Mammary epithelial cell (primary cell): ENCODE measurements at regions of chr12 and their contacts with region 1.

Region 1: GRCh38 chr12:104121001-104121400 is 17.0 kb downstream of the NFYB start:
- DNase-seq: peak; percentile 26
- H3K4me3 ChIP-seq: no peak overlapping the region
- H3K27ac ChIP-seq: no peak overlapping the region
- H3K4me1 ChIP-seq: no peaks in the 10 kb centered on the region
- H3K27me3 ChIP-seq: no peaks in the 10 kb centered on the region
- CTCF ChIP-seq: no peak

Region 2: DNA sequence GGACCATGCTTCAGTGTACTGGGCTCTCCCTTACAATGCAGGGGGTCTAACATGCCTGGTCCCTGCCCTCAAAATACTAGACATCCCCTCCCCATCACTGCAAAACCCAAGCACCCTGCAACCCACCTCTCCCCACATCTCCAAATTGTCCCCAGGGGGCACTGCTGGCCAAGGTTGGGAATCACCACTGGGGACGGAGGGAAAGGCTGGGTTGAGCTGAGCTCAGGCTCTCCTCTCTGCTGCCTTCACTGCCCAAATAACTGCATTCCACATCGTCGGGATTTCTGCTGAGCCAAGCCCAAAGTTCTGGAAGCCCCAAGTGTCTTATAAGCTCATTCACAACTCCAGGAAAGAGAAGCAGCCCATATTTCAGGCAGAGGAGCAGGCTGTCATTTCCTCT is 349.5 kb before region 1 on chr12:
- CTCF ChIA-PET with region 1: no interaction called
- dilution Hi-C with region 1: loop called (anchors 10 kb)
- in situ Hi-C with region 1: no loop called
- intact Hi-C with region 1: no loop called
- DNase-seq: no peak
- H3K4me3 ChIP-seq: no peak overlapping the region
- H3K27ac ChIP-seq: no peak overlapping the region
- H3K4me1 ChIP-seq: no peaks in the 10 kb centered on the region
- H3K27me3 ChIP-seq: no peaks in the 10 kb centered on the region
- CTCF ChIP-seq: peak; percentile 21 to 50

Region 3: DNA sequence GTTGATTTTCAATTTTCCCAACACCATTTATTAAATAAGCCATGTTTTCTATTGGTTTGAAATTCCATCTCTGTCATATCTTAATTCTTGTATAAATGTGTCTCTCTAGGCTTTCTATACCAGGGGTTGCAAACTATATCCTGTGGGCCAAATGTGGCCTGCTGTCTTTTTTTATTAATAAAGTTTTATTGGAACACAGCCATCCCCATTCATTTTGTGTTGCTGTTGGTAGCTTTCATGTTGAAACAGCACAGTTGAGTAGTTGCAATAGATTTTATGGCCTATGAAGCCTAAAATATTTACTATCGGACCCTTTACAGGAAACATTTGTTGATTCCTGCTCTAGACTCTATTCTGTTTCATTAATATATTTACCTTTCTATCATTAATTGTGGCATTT is 47.3 kb before region 1 on chr12:
- CTCF ChIA-PET with region 1: no interaction called
- dilution Hi-C with region 1: no loop called
- in situ Hi-C with region 1: no loop called
- intact Hi-C with region 1: loop called (anchors 1 kb)
- DNase-seq: no peak
- H3K4me3 ChIP-seq: no peak overlapping the region
- H3K27ac ChIP-seq: no peak overlapping the region
- H3K4me1 ChIP-seq: no peaks in the 10 kb centered on the region
- H3K27me3 ChIP-seq: no peaks in the 10 kb centered on the region
- CTCF ChIP-seq: no peak

Region 4: DNA sequence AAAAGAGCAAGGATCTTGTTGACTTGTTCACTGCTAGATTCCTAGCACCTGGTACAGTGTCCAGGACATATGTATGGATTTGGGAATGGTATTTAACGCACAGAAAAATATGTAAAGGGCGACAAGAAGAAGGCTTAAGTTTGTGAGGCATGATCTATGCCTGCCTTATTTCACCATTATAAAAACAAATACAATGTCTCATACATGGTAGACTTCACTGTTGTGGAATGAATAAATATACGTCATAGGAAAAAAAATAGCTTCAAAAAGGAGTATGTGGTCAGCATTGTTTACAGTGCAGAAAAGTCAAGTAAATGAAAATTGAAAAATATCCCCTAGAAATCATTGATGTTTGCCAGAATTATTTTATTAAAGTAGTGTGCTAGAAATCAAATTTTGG is 26.7 kb before region 1 on chr12:
- CTCF ChIA-PET with region 1: no interaction called
- dilution Hi-C with region 1: no loop called
- in situ Hi-C with region 1: no loop called
- intact Hi-C with region 1: no loop called
- DNase-seq: no peak
- H3K4me3 ChIP-seq: no peak overlapping the region
- H3K27ac ChIP-seq: no peak overlapping the region
- H3K4me1 ChIP-seq: no peaks in the 10 kb centered on the region
- H3K27me3 ChIP-seq: no peaks in the 10 kb centered on the region
- CTCF ChIP-seq: no peak